Activated B cell treated with CpG ODN at 0.5 μM for 24 hours (primary cell): ENCODE measurements at regions of chr9 and their contacts with region 1.

Region 1: GRCh38 chr9:99104459-99105151 is at the start of gene TGFBR1:
- DNase-seq: peak; percentile 98
- ATAC-seq: peak; percentile 85
- H3K4me3 Mint-ChIP-seq: peak within 1 kb of the TSS; percentile 89
- H3K27ac Mint-ChIP-seq: peak within 1 kb of the TSS; percentile 83
- H3K4me1 Mint-ChIP-seq: peaks cover 50% of the 10 kb centered on the region
- H3K27me3 Mint-ChIP-seq: no peaks in the 10 kb centered on the region
- CTCF ChIP-seq: no peak
- total RNA-seq, gene TGFBR1: 53.5 and 65.3 TPM in 2 replicates

Region 2: DNA sequence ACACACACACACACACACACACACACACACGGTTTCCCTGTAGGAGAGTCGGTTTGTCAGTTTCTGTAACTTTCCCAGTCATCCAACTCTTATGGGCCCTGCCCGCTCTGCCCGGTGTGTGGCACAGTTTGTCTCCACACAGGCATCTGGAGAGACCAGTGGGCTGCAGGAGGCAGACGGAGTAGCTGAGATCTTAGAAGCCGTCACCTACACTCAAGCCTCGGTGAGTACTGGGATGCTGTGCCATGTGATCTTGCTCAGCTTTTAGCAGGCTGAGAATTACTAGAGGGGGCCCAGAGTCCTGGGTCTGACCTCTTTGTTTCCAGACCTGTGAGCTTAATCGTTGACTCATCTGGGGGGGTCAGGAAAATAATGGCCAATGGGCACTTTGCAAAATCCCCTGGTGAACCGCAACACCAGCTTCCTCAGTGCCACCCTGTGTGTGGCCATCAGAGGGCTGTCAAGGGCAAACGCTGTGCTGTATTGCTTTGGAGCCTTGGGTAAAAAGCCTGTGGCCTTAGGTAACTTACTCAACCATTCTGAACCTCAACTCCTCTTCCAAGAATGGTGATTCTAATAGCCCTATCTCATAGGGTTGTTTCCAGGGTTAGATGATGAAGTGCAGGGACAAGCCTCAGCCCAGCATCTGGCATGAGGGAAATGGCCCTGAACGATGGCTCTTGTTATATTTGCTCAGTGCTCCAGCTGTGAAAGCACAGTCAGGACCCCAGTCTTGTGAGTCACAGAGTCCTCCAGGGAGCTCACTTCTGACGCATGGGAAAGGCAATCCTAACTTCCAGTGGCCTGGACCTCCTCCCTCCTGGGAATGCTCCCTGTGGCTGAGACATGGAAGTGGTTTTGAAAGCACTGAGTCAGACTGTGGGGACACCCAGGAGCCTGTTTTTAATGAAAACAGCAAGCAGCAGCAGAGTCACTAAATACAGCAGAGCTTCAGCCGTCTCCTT is 115.3 kb before region 1 on chr9:
- CTCF ChIA-PET with region 1: no interaction called
- POLR2A ChIA-PET with region 1: interaction called, 8 read pairs
- intact Hi-C with region 1: loop called (anchors 2 kb)
- DNase-seq: no peak
- ATAC-seq: no peak
- H3K4me3 Mint-ChIP-seq: no peak overlapping the region
- H3K27ac Mint-ChIP-seq: no peak overlapping the region
- H3K4me1 Mint-ChIP-seq: peaks cover 21% of the 10 kb centered on the region
- H3K27me3 Mint-ChIP-seq: no peaks in the 10 kb centered on the region
- CTCF ChIP-seq: no peak

Region 3: DNA sequence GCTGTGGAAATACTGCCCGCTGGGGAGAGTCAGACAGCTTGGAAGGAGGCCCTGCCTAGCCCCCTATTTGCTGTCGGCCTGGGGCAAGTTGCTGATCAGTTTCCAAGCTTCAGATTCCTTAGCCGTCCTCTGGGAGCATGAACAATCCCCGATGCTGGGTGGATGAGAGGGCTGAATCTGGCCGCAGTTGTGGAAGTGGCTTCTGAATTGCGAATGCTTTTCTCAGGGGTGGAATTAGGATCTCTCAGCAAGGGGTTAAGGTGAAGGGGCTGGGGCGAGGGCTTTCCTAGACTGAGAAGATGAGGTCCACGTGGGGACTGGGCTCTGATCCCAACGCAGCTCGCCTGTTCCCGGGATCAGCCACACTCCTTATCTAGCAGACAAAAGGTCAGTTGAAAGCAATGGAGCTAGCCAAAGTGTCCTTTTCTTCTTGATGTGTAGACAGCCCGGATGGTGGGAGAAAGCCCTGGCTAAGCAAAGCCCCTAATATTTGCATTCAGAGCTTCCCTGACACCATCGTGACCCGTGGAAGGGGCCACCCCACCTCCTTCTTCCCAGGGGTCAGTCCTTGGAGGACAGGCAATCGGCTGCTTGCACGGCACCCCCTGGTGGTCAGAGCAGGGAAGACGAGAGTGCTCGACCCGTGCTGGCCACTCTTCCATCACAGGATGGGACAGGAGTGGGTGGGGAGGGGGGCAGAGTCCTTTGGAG is 106.0 kb before region 1 on chr9:
- CTCF ChIA-PET with region 1: interaction called, 9 read pairs
- POLR2A ChIA-PET with region 1: interaction called, 8 read pairs
- intact Hi-C with region 1: loop called (anchors 1 kb)
- DNase-seq: peak; percentile 57
- ATAC-seq: peak; percentile 74
- H3K4me3 Mint-ChIP-seq: no peak overlapping the region
- H3K27ac Mint-ChIP-seq: no peak overlapping the region
- H3K4me1 Mint-ChIP-seq: peaks cover 21% of the 10 kb centered on the region
- H3K27me3 Mint-ChIP-seq: peaks cover 2% of the 10 kb centered on the region
- CTCF ChIP-seq: peak; percentile 67

Region 4: GRCh38 chr9:99118782-99119466 is 14.3 kb after region 1 on chr9:
- CTCF ChIA-PET with region 1: interaction called, 3 read pairs
- POLR2A ChIA-PET with region 1: interaction called, 21 read pairs
- intact Hi-C with region 1: loop called (anchors 1 kb)
- DNase-seq: no peak
- ATAC-seq: peak; percentile 97
- H3K4me3 Mint-ChIP-seq: peak overlapping the region; percentile 73
- H3K27ac Mint-ChIP-seq: peak overlapping the region; percentile 71
- H3K4me1 Mint-ChIP-seq: peaks cover 79% of the 10 kb centered on the region
- H3K27me3 Mint-ChIP-seq: no peaks in the 10 kb centered on the region
- CTCF ChIP-seq: no peak

Region 5: GRCh38 chr9:99130069-99130468 is 25.5 kb after region 1 on chr9:
- CTCF ChIA-PET with region 1: interaction called, 3 read pairs
- POLR2A ChIA-PET with region 1: interaction called, 22 read pairs
- intact Hi-C with region 1: loop called (anchors 1 kb)
- DNase-seq: no peak
- ATAC-seq: peak; percentile 94
- H3K4me3 Mint-ChIP-seq: peak overlapping the region; percentile 17
- H3K27ac Mint-ChIP-seq: peak overlapping the region; percentile 77
- H3K4me1 Mint-ChIP-seq: peaks cover 73% of the 10 kb centered on the region
- H3K27me3 Mint-ChIP-seq: no peaks in the 10 kb centered on the region
- CTCF ChIP-seq: no peak

Region 6: GRCh38 chr9:99135456-99135855 is 30.9 kb after region 1 on chr9:
- CTCF ChIA-PET with region 1: interaction called, 15 read pairs
- POLR2A ChIA-PET with region 1: interaction called, 22 read pairs
- intact Hi-C with region 1: loop called (anchors 1 kb)
- DNase-seq: no peak
- ATAC-seq: peak; percentile 63
- H3K4me3 Mint-ChIP-seq: peak overlapping the region; percentile 44
- H3K27ac Mint-ChIP-seq: peak overlapping the region; percentile 31
- H3K4me1 Mint-ChIP-seq: peaks cover 59% of the 10 kb centered on the region
- H3K27me3 Mint-ChIP-seq: no peaks in the 10 kb centered on the region
- CTCF ChIP-seq: no peak

Region 7: GRCh38 chr9:99906403-99907207 is 802.0 kb after region 1 on chr9 and contains the start of gene STX17:
- CTCF ChIA-PET with region 1: no interaction called
- POLR2A ChIA-PET with region 1: no interaction called
- intact Hi-C with region 1: loop called (anchors 2 kb)
- DNase-seq: peak; percentile 90
- ATAC-seq: peak; percentile 87
- H3K4me3 Mint-ChIP-seq: peak within 1 kb of the TSS; percentile 98
- H3K27ac Mint-ChIP-seq: peak within 1 kb of the TSS; percentile 95
- H3K4me1 Mint-ChIP-seq: peaks cover 17% of the 10 kb centered on the region
- H3K27me3 Mint-ChIP-seq: no peaks in the 10 kb centered on the region
- CTCF ChIP-seq: no peak
- total RNA-seq, gene STX17: 32.2 and 39.2 TPM in 2 replicates

Region 8: GRCh38 chr9:101028346-101029314 is 1924.0 kb after region 1 on chr9 and contains the start of gene PLPPR1:
- CTCF ChIA-PET with region 1: no interaction called
- POLR2A ChIA-PET with region 1: no interaction called
- intact Hi-C with region 1: no loop called
- DNase-seq: no peak
- ATAC-seq: no peak
- H3K4me3 Mint-ChIP-seq: no peak within 1 kb of the TSS
- H3K27ac Mint-ChIP-seq: no peak within 1 kb of the TSS
- H3K4me1 Mint-ChIP-seq: no peaks in the 10 kb centered on the region
- H3K27me3 Mint-ChIP-seq: peaks cover 45% of the 10 kb centered on the region
- CTCF ChIP-seq: no peak
- total RNA-seq, gene PLPPR1: not detected in 2 replicates